AG04450 (cell line): ENCODE measurements at regions of chrX and their contacts with region 1.

Region 1: DNA sequence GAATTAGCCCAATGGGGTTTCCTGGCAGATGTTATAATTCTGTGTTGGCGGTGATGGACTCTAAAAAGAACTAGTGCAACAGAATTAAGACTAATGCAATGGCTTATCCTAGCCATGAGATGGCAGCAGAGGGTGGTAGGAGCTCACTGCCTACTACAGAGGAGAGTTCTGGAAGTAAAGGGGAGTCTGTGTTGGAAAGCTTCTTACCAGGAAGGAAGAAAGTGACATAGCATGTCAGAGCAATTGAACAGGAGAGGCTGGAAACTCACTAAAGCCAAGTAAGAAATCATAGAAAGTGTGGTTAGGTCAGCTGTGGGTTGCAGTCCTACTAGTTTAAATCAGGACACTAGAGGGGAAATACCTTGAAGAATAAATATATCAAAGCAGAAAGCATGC is 6.3 kb upstream of the TRPC5OS start:
- DNase-seq: peak; percentile 8
- H3K4me3 ChIP-seq: no peak overlapping the region
- H3K27ac ChIP-seq: no peak overlapping the region
- H3K27me3 ChIP-seq: no peaks in the 10 kb centered on the region
- CTCF ChIP-seq: peak; percentile 73

Region 2: GRCh38 chrX:111896148-111896547 is 26.5 kb after region 1 on chrX:
- CTCF ChIA-PET with region 1: no interaction called
- POLR2A ChIA-PET with region 1: no interaction called
- DNase-seq: no peak
- H3K4me3 ChIP-seq: no peak overlapping the region
- H3K27ac ChIP-seq: no peak overlapping the region
- H3K27me3 ChIP-seq: no peaks in the 10 kb centered on the region
- CTCF ChIP-seq: no peak

Region 3: GRCh38 chrX:112043997-112044396 is 174.4 kb after region 1 on chrX:
- CTCF ChIA-PET with region 1: interaction called, 23 read pairs
- POLR2A ChIA-PET with region 1: no interaction called
- DNase-seq: no peak
- H3K4me3 ChIP-seq: no peak overlapping the region
- H3K27ac ChIP-seq: no peak overlapping the region
- H3K27me3 ChIP-seq: no peaks in the 10 kb centered on the region
- CTCF ChIP-seq: no peak

Region 4: DNA sequence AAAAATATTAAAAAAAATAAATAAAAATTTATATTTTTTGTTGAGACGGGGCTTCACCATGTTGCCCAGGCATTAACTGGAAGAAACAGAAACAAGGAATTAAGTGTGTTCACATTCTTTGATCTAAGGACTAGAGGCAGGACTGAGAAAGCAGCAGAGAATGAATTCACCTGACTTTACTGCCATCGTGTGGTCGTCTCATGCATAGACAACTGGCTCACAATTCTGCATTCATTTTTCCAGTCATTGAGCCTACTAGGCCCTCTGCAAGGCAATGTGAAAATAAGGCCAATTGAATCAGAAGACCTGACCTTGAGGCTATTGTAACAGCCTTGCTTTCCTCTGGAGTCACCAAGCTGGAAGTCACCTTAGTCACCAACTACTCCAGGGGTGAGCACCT is 772.7 kb after region 1 on chrX:
- CTCF ChIA-PET with region 1: interaction called, 26 read pairs
- POLR2A ChIA-PET with region 1: no interaction called
- DNase-seq: peak; percentile 23
- H3K4me3 ChIP-seq: no peak overlapping the region
- H3K27ac ChIP-seq: no peak overlapping the region
- H3K27me3 ChIP-seq: no peaks in the 10 kb centered on the region
- CTCF ChIP-seq: peak; percentile 66